ENCODE measurements at regions of chr1 and their contacts with region 1.

Region 1: DNA sequence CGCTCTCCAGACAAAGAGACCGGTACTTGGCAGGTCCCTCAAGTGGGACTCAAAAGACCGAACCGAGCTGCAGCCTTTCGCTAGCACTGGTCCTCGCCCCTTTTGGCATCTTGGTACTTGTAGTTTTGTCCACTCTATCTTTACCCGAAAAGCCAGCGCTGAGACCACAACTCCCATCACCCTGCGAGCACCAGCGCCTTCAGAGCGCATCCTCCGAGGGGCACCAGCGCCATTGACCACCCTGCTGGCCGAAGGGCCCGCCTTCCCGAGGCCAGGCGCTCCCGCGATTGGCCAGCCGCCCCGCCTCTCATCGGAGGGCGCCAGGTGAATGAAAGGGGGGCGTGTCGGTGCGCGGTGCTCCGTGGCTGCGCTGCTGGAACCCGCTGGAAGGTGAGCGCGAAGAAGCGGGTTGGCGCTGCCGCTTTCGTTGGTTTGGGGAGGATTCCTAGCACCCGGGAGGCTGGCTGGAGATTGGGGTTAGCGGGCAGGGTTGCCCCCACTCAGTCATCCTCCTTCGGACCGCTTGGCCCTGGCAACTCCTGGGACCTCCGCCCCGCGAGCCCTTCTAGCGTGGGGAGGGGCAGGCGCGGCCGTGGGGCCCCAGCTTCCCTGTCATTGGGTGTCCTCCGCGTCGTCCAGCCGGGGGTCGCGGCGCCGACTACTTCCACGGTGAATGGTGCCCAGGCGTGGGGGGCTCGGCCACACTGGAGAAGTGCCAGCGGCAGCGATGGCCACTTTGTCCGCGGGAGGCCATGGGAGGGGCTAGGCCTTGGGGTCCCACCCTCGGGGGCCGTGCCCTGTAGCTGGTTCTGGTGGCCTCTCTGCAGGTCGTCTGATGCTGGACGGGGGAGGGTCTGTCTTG is at the start of gene ZBTB8B:
- DNase-seq: peak; percentile 71 to 98 (median 92)
- H3K4me3 ChIP-seq: peak within 1 kb of the TSS; percentile 52 to 94 (median 77)
- H3K27ac ChIP-seq: peak within 1 kb of the TSS in 33 of 59 donors; percentile 3 to 75 (median 45)
- H3K27me3 ChIP-seq: peaks cover 0 to 3% (median 0%) of the 10 kb centered on the region in 45 donors
- CTCF ChIP-seq: peak in 41 of 56 donors; percentile 18 to 55 (median 41)
- total RNA-seq, gene ZBTB8B: 0.64 to 4.2 (median 1.7) TPM

Region 2: DNA sequence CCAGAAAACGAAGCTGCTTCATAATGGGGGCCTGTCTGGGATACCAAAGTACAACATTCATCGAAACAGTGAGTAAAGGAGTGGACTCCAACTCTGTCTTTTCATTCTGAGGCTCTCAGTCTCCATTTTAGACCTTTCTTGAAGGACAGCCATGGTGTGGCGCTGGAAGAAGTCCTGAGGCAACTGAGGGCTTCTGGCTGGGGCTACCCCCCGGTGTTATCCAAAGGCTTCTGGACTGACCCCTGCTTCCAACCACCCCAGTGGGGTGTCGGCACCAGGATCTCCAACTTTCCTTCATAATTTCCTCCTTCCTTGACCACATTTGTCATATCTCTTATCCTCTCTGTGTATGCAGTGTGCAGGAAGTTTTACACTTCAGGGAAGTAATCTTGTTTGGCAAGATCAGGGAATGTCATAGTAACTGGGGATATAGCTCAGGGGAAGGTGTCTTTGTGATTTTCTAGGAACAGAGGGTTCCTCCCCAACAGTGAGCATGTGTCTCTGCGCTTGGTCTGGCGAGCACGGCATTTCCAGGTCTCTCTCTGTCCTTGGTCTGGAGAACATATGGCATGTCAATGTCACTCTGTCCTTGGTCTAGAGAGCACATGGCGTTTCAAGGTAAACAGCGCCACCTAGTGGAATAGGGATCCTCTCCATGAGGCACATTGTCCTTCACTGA is 51.3 kb before region 1 on chr1:
- intact Hi-C with region 1: no loop called
- DNase-seq: peak in 4 of 10 donors; percentile 22 to 85 (median 53)
- H3K4me3 ChIP-seq: no peak overlapping the region
- H3K27ac ChIP-seq: no peak overlapping the region
- H3K27me3 ChIP-seq: no peaks in the 10 kb centered on the region
- CTCF ChIP-seq: peak in 55 of 56 donors; percentile 44 to 84 (median 74)

Region 3: DNA sequence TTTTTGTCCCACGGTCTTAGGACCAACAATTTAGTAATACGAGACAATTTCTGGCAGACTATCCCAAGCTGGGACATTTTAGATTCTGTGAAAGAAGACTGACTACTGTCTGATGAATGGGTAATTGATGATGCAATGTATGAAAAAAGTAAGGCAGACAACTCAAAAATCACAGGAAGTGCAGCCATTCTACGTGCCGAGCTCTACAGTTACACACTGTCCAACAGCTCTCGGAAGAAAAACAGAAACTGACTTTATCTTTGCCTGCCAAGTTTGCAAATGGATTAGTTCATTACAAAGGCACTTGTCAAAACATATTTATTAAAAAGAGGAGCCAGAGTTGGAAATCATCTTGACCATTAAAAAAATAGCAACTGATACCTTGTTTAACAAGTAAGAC is 31.2 kb after region 1 on chr1:
- intact Hi-C with region 1: loop called in 1 of 2 experiments (anchors 5 kb)
- DNase-seq: no peak
- H3K4me3 ChIP-seq: peak overlapping the region in 23 of 59 donors; percentile 0 to 47 (median 21)
- H3K27ac ChIP-seq: peak overlapping the region in 5 of 59 donors; percentile 7 to 43 (median 20)
- H3K27me3 ChIP-seq: no peaks in the 10 kb centered on the region
- CTCF ChIP-seq: no peak

Measured in dorsolateral prefrontal cortex (tissue), 120 donors.